CD8-positive, alpha-beta T cell (primary cell): ENCODE measurements at regions of chr2 and their contacts with region 1.

Region 1: GRCh38 chr2:134668821-134669220 is 50.0 kb downstream of the TMEM163 start:
- DNase-seq: peak; percentile 50 to 95 (median 78)
- ATAC-seq: peak; percentile 73
- H3K4me3 ChIP-seq: peak overlapping the region; percentile 0 to 10
- H3K4me3 Mint-ChIP-seq: peak overlapping the region; percentile 42
- H3K27ac ChIP-seq: peak overlapping the region in 1 of 2 experiments; percentile 83
- H3K27ac Mint-ChIP-seq: peak overlapping the region; percentile 82
- H3K4me1 ChIP-seq: peaks cover 60% of the 10 kb centered on the region
- H3K4me1 Mint-ChIP-seq: peaks cover 82% of the 10 kb centered on the region
- H3K27me3 ChIP-seq: no peaks in the 10 kb centered on the region
- H3K27me3 Mint-ChIP-seq: peaks cover 20% of the 10 kb centered on the region
- CTCF ChIP-seq: no peak

Region 2: DNA sequence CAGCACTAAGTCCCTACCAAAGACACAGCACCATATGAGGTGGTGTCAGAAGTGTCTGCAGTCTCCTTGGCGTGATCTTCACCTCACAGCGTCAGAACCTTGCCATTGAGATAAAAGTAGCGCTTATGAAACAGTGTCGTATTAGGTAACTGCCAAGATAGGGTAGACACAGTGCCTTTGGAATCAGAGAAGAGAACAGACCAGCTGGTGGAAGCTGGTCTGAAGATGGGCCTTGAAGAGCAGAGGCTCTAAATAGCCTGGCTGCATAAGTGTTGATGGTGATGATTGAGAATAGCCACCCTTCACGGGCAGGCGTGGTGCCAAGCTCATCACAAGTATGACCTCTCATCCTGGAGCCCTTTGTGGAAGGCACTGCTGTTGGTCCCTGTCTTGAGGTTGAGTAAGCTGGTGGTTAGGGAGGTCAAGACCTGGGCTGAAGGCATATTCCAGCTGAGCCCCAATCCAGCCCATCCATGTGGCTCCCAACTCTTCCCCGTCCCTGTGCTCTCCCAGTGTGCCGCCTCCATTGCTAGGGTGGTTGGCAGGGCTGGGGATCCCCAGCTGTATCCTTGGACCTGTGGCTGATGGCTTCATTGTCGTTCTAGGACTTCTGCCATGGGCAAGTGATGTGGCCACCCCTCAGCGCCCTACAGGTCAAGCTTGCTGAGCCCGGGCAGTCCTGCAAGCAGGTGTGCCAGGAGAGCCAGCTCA is 227.5 kb before region 1 on chr2:
- CTCF ChIA-PET with region 1: no interaction called
- POLR2A ChIA-PET with region 1: no interaction called
- intact Hi-C with region 1: no loop called
- DNase-seq: no peak
- ATAC-seq: no peak
- H3K4me3 ChIP-seq: no peak overlapping the region
- H3K4me3 Mint-ChIP-seq: no peak overlapping the region
- H3K27ac ChIP-seq: no peak overlapping the region
- H3K27ac Mint-ChIP-seq: no peak overlapping the region
- H3K4me1 ChIP-seq: no peaks in the 10 kb centered on the region
- H3K4me1 Mint-ChIP-seq: no peaks in the 10 kb centered on the region
- H3K27me3 ChIP-seq: no peaks in the 10 kb centered on the region
- H3K27me3 Mint-ChIP-seq: no peaks in the 10 kb centered on the region
- CTCF ChIP-seq: no peak

Region 3: GRCh38 chr2:134683561-134684112 is 14.8 kb after region 1 on chr2:
- CTCF ChIA-PET with region 1: interaction called, 4 read pairs
- POLR2A ChIA-PET with region 1: interaction called, 25 read pairs
- intact Hi-C with region 1: loop called (anchors 1 kb)
- DNase-seq: peak in 1 of 9 experiments; percentile 24
- ATAC-seq: no peak
- H3K4me3 ChIP-seq: no peak overlapping the region
- H3K4me3 Mint-ChIP-seq: no peak overlapping the region
- H3K27ac ChIP-seq: no peak overlapping the region
- H3K27ac Mint-ChIP-seq: no peak overlapping the region
- H3K4me1 ChIP-seq: peaks cover 23% of the 10 kb centered on the region
- H3K4me1 Mint-ChIP-seq: peaks cover 27% of the 10 kb centered on the region
- H3K27me3 ChIP-seq: no peaks in the 10 kb centered on the region
- H3K27me3 Mint-ChIP-seq: peaks cover 8% of the 10 kb centered on the region
- CTCF ChIP-seq: no peak

Region 4: DNA sequence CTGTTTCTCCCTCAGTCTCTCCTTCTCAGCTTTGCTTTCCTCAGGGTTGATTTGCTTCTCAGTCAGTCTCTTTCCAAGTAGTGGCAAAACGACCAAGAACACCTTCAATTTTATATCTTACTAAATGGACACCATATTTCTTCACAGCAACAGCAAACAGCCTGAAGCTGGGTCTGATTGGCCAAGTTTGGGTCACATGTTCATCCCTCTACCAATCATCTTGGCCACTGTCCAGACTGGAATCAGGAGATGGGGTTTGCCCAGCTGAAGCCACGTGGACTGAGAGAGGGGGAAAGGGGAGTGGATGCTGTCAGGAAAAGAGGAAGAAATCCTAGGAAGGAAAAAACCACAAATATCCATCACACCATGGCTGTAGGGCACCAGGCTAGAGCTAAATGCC is 127.6 kb after region 1 on chr2:
- CTCF ChIA-PET with region 1: no interaction called
- POLR2A ChIA-PET with region 1: no interaction called
- intact Hi-C with region 1: no loop called
- DNase-seq: no peak
- ATAC-seq: no peak
- H3K4me3 ChIP-seq: no peak overlapping the region
- H3K4me3 Mint-ChIP-seq: no peak overlapping the region
- H3K27ac ChIP-seq: no peak overlapping the region
- H3K27ac Mint-ChIP-seq: no peak overlapping the region
- H3K4me1 ChIP-seq: no peaks in the 10 kb centered on the region
- H3K4me1 Mint-ChIP-seq: no peaks in the 10 kb centered on the region
- H3K27me3 ChIP-seq: no peaks in the 10 kb centered on the region
- H3K27me3 Mint-ChIP-seq: peaks cover 3% of the 10 kb centered on the region
- CTCF ChIP-seq: no peak